Caco-2 (cell line): ENCODE measurements at regions of chr12 and their contacts with region 1.

Region 1: DNA sequence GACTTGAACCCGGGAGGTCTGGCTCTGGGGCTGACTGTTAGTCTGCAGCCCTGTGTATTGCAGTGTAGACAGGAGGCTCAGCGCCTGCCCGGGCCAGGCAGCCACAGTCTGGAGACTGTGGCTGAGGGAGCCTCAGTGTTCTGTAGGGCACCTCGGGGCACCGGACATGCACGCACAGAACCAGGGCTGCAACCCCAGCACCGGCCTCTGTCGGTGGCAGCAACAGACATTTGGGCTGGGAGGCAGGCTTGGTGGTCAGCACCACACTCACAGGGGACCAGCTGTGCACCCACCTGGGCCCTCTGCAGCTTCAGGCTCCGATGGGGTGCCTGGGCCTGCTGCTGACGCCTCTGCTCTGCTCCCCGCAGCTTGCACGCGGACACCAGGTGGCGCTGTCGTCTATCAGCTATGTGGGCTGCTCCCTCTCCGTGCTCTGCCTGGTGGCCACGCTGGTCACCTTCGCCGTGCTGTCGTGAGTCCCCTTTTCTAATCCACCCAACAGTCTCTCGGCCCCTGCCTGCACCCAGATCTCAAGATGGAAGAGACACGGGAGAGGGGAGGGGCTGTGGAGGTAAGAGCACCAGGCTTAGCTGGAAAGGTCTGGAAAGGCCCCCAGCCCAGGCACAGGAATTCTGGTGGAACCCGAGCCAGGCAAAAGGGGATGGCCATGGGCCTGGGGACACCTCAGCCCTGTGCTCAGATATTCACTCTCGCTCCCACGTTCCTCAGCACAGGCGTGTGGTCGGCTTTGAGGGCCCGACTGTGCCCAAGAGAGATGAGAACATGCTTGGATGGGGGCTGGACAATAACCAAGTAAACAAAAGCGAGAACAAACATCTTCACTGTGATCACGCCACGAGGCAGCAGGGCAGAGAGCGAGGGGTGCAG is 151.0 kb downstream of the ADGRD1 start:
- DNase-seq: peak; percentile 82 to 88
- H3K4me3 ChIP-seq: no peak overlapping the region
- H3K4me3 Mint-ChIP-seq: no peak overlapping the region
- H3K27ac Mint-ChIP-seq: no peak overlapping the region
- H3K4me1 ChIP-seq: no peaks in the 10 kb centered on the region
- H3K4me1 Mint-ChIP-seq: no peaks in the 10 kb centered on the region
- H3K27me3 ChIP-seq: no peaks in the 10 kb centered on the region
- H3K27me3 Mint-ChIP-seq: no peaks in the 10 kb centered on the region
- CTCF ChIP-seq: peak; percentile 94

Region 2: DNA sequence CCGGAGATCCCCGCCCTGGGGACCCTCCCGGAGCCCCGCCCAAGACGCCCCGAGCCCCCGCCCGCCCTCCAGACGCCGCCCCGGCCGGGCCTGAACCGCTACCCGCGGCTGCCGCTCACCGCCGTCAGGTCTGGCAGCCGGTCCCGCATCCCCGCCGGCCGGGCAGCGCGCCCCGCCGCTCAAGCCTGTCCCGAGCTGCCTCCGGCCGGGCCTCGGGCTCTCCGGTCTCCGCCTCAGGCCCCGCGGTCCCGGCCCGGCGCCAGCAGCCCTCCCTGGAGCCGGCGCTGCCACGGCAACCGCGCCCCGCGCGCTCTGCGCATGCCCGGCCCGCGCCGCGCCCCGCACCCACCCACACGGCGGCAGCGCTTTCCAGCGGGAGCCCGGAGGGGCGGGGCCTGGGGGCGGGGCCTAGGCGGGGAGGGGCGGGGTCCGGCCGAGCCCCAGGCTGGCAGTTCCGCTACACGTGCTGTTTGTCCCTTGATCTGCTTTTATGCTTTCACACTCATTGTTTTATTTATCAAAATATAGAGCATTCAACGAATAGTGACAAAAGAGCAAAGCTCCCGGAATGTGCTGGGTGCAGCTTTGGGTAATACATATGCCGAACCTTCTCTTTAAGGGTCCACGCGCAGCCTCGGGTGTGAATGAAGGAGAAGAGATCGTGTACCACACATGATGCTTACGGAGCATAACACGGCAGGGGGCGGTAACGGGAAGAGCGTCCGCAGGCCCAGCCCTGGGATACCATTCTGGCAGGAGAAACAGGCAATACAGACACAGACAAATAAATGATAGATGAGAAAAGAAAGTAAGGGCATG is 265.5 kb before region 1 on chr12 and contains the start of gene STX2:
- CTCF ChIA-PET with region 1: no interaction called
- POLR2A ChIA-PET with region 1: no interaction called
- intact Hi-C with region 1: no loop called
- DNase-seq: peak; percentile 78 to 91
- H3K4me3 ChIP-seq: peak within 1 kb of the TSS; percentile 42
- H3K4me3 Mint-ChIP-seq: peak within 1 kb of the TSS; percentile 69
- H3K27ac Mint-ChIP-seq: peak within 1 kb of the TSS; percentile 53
- H3K4me1 ChIP-seq: peaks cover 6% of the 10 kb centered on the region
- H3K4me1 Mint-ChIP-seq: peaks cover 7% of the 10 kb centered on the region
- H3K27me3 ChIP-seq: no peaks in the 10 kb centered on the region
- H3K27me3 Mint-ChIP-seq: no peaks in the 10 kb centered on the region
- CTCF ChIP-seq: peak; percentile 28 to 37
- total RNA-seq, gene STX2: 11.2 and 12.6 TPM in 2 replicates

Region 3: GRCh38 chr12:130992448-130992847 is 112.3 kb before region 1 on chr12:
- CTCF ChIA-PET with region 1: no interaction called
- POLR2A ChIA-PET with region 1: no interaction called
- intact Hi-C with region 1: no loop called
- DNase-seq: no peak
- H3K4me3 ChIP-seq: no peak overlapping the region
- H3K4me3 Mint-ChIP-seq: no peak overlapping the region
- H3K27ac Mint-ChIP-seq: no peak overlapping the region
- H3K4me1 ChIP-seq: peaks cover 2% of the 10 kb centered on the region; the same call in 1 of the 2 replicates
- H3K4me1 Mint-ChIP-seq: peaks cover 2% of the 10 kb centered on the region
- H3K27me3 ChIP-seq: no peaks in the 10 kb centered on the region
- H3K27me3 Mint-ChIP-seq: peaks cover under 1% of the 10 kb centered on the region
- CTCF ChIP-seq: no peak

Region 4: GRCh38 chr12:131454418-131455217 is 349.9 kb after region 1 on chr12:
- CTCF ChIA-PET with region 1: interaction called, 8 read pairs
- POLR2A ChIA-PET with region 1: no interaction called
- intact Hi-C with region 1: loop called (anchors 1 kb)
- DNase-seq: peak; percentile 66 to 71
- H3K4me3 ChIP-seq: no peak overlapping the region
- H3K4me3 Mint-ChIP-seq: no peak overlapping the region
- H3K27ac Mint-ChIP-seq: no peak overlapping the region
- H3K4me1 ChIP-seq: no peaks in the 10 kb centered on the region
- H3K4me1 Mint-ChIP-seq: no peaks in the 10 kb centered on the region
- H3K27me3 ChIP-seq: no peaks in the 10 kb centered on the region
- H3K27me3 Mint-ChIP-seq: peaks cover 18% of the 10 kb centered on the region
- CTCF ChIP-seq: peak; percentile 72 to 75